ENCODE measurements at regions of chr1 and their contacts with region 1.

Region 1: DNA sequence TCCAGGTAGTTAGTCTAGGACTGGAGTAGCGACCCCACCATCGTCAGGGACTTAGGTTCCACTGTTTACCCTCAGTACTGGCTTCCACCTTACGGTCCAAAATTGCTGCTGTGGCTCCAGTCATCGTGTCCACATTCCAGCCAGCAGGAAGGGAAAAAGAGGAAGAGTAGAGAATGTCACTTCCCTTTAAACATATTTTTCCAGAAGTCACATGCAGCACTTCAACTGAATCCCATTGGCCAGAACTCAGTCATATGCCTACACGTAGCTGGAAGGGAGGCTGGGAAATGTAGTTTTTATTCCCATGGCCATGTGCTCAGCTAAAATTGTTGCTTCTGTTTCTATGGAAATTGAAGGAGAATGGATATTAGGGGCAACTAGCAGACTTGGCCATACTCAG is 84.1 kb upstream of the SELENON start:
- DNase-seq: no peak
- H3K4me3 Mint-ChIP-seq: no peak overlapping the region
- H3K27ac Mint-ChIP-seq: no peak overlapping the region
- H3K4me1 Mint-ChIP-seq: peaks cover 24% of the 10 kb centered on the region
- H3K27me3 Mint-ChIP-seq: no peaks in the 10 kb centered on the region

Region 2: DNA sequence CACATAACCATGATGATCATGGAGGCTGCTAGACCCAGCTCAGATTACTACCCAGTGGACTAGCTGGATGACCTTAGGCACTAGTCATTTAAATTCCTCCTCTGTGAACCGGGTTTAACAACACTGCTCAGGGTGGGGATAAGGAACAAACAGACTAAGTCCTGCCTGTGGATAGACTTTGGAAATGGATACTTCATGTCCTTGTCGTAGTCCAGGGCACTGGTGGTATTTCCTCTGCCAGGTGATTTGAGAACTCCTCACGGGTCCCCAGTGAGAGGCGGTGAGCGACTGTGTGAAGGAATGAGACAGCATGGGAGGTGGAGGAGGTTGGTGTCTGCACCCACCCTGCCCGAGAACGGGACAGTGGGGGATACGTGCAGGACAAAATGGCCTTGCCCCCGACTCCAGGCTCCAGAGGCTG is 11.2 kb after region 1 on chr1:
- CTCF ChIA-PET with region 1: interaction called, 12 read pairs
- POLR2A ChIA-PET with region 1: interaction called, 3 read pairs
- DNase-seq: no peak
- H3K4me3 Mint-ChIP-seq: no peak overlapping the region
- H3K27ac Mint-ChIP-seq: no peak overlapping the region
- H3K4me1 Mint-ChIP-seq: peaks cover 46% of the 10 kb centered on the region
- H3K27me3 Mint-ChIP-seq: peaks cover 13% of the 10 kb centered on the region

Region 3: GRCh38 chr1:25771246-25772114 is 55.6 kb after region 1 on chr1:
- CTCF ChIA-PET with region 1: no interaction called
- POLR2A ChIA-PET with region 1: no interaction called
- DNase-seq: peak; percentile 12
- H3K4me3 Mint-ChIP-seq: no peak overlapping the region
- H3K27ac Mint-ChIP-seq: no peak overlapping the region
- H3K4me1 Mint-ChIP-seq: peaks cover 57% of the 10 kb centered on the region
- H3K27me3 Mint-ChIP-seq: peaks cover 7% of the 10 kb centered on the region

Region 4: DNA sequence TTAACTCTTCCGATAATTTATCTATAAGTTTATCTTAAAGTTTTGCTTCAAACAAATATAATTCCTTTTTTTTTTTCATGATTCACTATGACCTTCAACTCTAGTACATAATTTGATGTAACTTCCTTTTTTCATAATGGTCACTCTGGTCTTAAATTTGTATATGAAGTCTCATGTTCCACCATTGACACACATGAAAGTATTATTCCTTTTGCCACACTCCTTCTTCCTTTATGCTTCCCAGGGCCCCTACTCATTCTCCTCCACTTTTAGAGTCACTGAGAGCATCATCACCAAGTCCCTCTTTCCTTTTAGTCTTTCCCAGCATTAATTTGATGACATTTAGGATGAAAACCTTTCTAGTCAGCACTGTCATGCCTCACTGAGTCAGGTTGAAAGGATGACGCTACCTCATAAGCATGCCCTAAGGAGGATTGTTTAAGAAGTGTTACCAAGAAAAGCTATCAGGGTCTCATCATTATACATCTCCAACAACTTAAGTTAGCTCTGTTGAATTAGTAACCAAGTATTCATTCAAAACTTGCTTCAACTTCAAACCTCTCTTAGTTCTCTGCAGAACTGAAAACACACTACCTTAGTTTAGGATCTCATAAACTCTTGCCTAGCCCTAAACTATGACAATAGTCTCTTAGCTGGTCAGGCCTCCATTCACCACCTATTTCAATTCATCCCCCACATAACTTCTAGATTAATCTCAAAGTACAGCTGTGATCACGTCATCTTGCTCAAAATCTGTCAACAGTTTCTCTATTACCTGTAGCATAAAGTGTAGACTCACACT is 128.8 kb after region 1 on chr1:
- CTCF ChIA-PET with region 1: no interaction called
- POLR2A ChIA-PET with region 1: no interaction called
- DNase-seq: no peak
- H3K4me3 Mint-ChIP-seq: no peak overlapping the region
- H3K27ac Mint-ChIP-seq: no peak overlapping the region
- H3K4me1 Mint-ChIP-seq: no peaks in the 10 kb centered on the region
- H3K27me3 Mint-ChIP-seq: no peaks in the 10 kb centered on the region

Region 5: GRCh38 chr1:25858906-25859789 is 143.3 kb after region 1 on chr1 and contains the start of gene AUNIP:
- CTCF ChIA-PET with region 1: no interaction called
- POLR2A ChIA-PET with region 1: no interaction called
- DNase-seq: peak; percentile 91
- H3K4me3 Mint-ChIP-seq: peak within 1 kb of the TSS; percentile 93
- H3K27ac Mint-ChIP-seq: peak within 1 kb of the TSS; percentile 87
- H3K4me1 Mint-ChIP-seq: peaks cover 29% of the 10 kb centered on the region
- H3K27me3 Mint-ChIP-seq: no peaks in the 10 kb centered on the region
- total RNA-seq, gene AUNIP: 6.7 to 8.1 TPM

Region 6: DNA sequence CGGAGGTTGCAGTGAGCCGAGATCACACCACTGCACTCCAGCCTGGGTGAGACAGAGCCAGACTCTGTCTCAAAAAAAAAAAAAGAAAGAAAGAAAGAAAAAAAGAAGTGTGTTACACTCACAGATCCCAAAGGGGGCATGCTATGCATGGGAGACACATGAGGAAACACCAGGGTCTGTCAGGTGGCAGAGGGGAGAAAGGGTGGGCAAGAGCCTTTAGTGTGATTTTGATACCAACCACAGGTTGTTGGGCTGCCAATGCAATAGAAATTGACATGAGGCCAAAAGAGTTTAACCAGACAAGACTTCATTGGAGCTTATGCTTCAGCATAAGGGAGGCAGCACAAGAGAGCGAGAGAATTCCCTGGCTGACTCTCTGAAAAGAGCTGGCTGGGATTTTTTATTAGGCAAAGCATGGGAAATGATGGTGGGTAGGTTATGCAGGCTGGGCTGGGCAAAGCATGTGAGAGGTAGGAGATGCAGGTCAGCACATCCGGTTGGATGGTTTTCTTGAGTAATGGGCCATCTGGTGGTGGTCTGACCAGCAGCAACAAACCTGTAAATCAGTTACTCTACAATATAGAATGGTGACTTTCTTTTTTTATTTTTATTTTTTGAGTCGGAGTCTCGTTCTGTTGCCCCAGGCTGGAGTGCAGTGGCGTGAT is 294.0 kb after region 1 on chr1:
- CTCF ChIA-PET with region 1: no interaction called
- POLR2A ChIA-PET with region 1: no interaction called
- DNase-seq: no peak
- H3K4me3 Mint-ChIP-seq: no peak overlapping the region
- H3K27ac Mint-ChIP-seq: no peak overlapping the region
- H3K4me1 Mint-ChIP-seq: no peaks in the 10 kb centered on the region
- H3K27me3 Mint-ChIP-seq: peaks cover 2% of the 10 kb centered on the region

Measured in activated CD4-positive, alpha-beta T cell treated with anti-CD3 and anti-CD28 coated beads, Interleukin-2, amount 10 ng/mL, durations not matched to agents 7 days and 5 days (primary cell).